Gastrocnemius medialis (tissue), 4 donors: ENCODE measurements at regions of chr2 and their contacts with region 1.

Region 1: DNA sequence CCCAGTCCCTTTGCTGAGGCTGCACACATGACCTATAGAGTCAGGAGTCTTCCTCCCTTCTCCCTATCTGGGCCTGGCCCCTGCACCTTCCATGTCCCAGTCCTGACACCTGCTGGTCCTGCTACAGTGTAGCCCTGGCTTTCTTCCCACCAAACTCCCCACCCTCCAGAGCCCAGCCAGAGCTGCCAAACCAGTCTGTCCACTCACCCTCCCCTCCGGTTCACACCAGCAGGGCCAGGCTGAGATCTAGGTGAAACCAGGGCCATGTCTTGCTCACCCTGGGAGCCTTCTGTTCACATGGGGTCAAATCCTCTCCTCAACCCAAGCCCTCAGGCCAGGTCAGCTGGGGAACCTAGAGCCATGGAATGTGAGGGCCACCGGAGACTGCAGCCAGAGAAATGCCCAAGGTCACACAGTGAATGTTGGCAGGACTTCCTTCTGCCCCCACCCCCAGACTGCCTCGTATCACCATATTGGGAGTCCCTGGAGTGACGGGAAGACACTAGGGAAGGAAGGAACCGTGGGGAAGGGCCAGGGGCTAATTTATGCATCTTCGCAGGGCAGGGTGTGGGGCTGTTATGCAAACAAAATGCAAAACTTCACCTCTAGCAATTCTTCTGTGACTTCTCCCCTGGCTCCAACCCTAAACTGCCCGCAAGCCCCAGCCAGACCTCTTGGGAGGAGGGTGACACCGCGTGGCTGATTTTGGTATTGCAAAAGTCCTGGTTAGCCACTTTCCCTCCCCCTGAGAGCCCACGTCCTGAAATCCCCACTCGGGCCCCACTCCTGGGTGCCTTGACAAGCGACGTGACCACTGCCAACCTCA is 14.6 kb downstream of the TNS1 start:
- DNase-seq: peak; percentile 72 to 85
- ATAC-seq: peak; percentile 73 to 80
- H3K4me3 ChIP-seq: peak overlapping the region in 1 of 4 donors; percentile 2
- H3K27ac ChIP-seq: peak overlapping the region; percentile 65 to 78 (median 72)
- H3K4me1 ChIP-seq: peaks cover 20 to 23% of the 10 kb centered on the region in 2 donors
- H3K27me3 ChIP-seq: no peaks in the 10 kb centered on the region
- CTCF ChIP-seq: peak; percentile 92 to 97 (median 95)
- POLR2A ChIP-seq: no peak

Region 2: DNA sequence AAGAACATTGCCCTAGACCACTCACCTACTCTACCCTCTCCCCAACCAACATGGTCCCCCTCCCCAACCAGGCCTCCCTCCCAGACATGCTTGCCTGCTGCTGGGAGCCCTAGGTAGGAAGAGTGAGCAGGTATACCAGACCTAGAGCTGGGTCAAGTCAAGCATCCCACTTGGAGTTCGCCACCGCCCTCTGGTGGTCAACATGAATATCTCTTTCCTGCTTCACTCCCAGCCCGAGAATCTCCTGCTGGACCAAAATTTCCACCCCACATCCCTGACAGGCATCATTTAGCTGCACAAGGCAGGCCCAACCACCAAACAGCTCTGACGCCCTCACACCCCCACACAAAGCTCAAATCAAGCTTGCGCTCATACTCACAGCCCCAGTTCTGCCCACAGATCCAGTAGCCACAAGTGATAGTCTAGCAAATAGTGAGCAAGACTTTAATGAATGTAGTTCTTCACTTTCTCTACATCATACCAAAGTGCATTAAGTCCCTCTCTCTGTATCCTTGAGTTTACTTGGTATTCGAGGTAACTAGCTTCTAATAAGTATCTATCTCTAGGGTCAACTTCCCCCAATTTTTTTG is 101.4 kb before region 1 on chr2:
- in situ Hi-C with region 1: loop called (anchors 5 to 10 kb)
- intact Hi-C with region 1: loop called (anchors 1 kb)
- DNase-seq: peak; percentile 66 to 76
- ATAC-seq: peak; percentile 44 to 69
- H3K4me3 ChIP-seq: no peak overlapping the region
- H3K27ac ChIP-seq: peak overlapping the region; percentile 43 to 87 (median 74)
- H3K4me1 ChIP-seq: peaks cover 25 to 26% of the 10 kb centered on the region in 2 donors
- H3K27me3 ChIP-seq: no peaks in the 10 kb centered on the region
- CTCF ChIP-seq: peak; percentile 81 to 95 (median 89)
- POLR2A ChIP-seq: no peak

Region 3: DNA sequence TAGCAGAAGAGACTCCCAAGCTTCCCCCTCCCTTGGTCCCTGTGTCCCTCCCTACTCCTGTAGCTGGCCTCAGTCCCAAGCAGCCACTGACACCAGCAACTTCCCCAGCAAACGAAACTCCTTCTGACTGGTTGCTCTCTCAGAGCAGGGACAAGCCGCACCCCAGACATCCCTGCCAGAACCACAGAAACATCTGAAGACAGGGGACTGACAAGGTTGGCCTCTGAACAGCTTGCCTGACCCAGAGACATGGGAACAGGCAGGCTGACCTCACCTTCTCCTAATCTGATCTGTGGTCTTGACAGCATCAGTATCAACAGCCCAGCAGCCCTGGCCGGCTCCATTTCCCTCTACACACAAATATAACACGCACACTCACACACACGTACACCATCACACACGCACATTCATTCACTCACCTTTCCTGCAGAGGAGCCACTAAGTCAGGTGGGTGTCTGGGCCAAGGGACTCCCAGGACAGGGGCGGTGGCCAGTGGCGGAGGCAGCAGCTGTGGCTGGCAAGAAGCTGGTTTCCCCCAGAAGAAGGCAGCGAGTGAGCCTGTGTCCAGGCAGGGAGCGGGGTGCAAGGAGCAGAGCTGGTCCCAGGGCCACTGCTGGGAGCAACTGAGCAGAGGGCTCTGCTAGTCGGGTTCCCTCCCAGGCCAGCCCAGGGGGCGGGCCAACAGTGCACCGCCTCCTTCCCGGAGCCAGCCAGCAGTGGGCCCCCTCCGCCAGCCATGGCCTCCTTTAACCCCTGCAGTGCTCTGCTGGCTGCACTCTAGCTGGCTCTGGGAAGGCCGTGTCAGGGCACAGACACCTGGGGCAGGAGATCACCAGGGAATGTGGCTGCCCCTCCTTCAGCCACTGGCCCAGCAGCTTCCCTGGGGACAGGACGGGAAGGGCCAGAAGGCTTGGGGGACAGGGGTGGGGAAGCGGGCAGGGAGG is 44.5 kb before region 1 on chr2:
- in situ Hi-C with region 1: no loop called
- intact Hi-C with region 1: loop called (anchors 1 kb)
- DNase-seq: peak; percentile 58 to 62
- ATAC-seq: peak; percentile 54 to 60
- H3K4me3 ChIP-seq: peak overlapping the region; percentile 53 to 61 (median 56)
- H3K27ac ChIP-seq: peak overlapping the region; percentile 87 to 94 (median 89)
- H3K4me1 ChIP-seq: peaks cover 33 to 41% of the 10 kb centered on the region in 2 donors
- H3K27me3 ChIP-seq: no peaks in the 10 kb centered on the region
- CTCF ChIP-seq: peak in 3 of 5 experiments; percentile 6 to 58 (median 45)
- POLR2A ChIP-seq: peak; percentile 75 to 77

Region 4: DNA sequence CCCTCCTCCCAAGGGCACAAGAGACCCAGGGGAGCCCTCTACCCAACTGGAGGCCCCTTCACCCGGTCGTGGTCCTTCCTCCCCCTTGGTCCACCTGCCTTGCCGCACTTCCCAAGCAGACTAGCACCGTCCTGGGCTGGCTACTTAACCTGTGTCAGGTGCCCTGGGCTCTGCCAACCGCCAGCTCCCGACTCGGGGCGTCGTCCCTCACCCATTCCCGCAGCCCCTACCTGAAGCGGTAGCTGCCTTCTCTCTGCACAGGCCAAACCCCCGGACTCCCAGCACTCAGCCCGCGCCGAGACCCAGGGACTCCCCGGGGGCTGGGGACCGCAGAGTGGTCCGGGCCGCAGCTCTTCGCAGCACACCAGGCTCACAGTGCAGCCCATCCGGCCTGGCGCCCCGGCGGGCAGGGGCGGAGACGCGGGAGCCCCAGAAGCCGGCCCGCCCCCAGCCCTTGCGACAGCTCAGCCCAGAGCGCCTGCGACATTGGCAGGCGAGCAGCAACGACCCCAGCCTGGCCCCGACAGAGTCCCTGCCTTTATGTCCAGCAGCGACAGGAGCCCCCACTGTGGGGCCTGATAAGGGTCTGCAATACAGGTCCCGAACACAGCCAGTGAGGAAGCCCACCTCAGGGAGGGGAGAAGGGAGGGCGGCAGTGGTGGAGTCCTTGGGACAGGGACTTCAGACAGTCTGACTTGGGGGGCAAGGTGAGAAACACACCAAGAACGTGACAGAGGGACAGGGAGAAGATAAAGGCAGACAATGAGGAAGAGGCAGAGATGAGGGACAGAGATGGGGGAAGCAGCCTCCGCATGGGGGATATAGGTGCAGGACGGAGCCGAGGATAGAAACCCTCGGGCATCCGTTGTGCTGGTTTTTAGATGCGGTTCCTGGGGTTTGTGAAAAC is 45.6 kb after region 1 on chr2:
- in situ Hi-C with region 1: no loop called
- intact Hi-C with region 1: loop called (anchors 2 kb)
- DNase-seq: peak in 1 of 2 donors; percentile 12
- ATAC-seq: no peak
- H3K4me3 ChIP-seq: no peak overlapping the region
- H3K27ac ChIP-seq: no peak overlapping the region
- H3K4me1 ChIP-seq: peaks cover 11 to 16% of the 10 kb centered on the region in 2 donors
- H3K27me3 ChIP-seq: no peaks in the 10 kb centered on the region
- CTCF ChIP-seq: no peak
- POLR2A ChIP-seq: no peak

Region 5: DNA sequence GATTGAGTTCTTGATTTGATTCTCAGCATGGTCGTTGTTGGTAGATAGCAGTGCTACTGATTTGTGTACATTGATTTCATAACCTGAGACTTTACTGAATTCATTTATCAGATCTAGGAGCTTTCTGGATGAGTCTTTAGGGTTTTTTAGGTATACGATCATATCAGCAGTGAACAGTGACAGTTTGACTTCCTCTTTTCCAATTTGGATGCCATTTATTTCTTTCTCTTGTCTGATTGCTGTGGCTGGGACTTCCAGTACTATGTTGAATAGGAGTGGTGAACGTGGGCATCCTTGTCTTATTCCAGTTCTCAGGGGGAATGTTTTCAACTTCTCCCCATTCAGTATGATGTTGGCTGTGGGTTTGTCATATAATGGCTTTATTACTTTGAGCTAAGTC is 109.7 kb after region 1 on chr2:
- in situ Hi-C with region 1: no loop called
- intact Hi-C with region 1: no loop called
- DNase-seq: no peak
- ATAC-seq: no peak
- H3K4me3 ChIP-seq: no peak overlapping the region
- H3K27ac ChIP-seq: no peak overlapping the region
- H3K4me1 ChIP-seq: no peaks in the 10 kb centered on the region
- H3K27me3 ChIP-seq: no peaks in the 10 kb centered on the region
- CTCF ChIP-seq: no peak
- POLR2A ChIP-seq: no peak